ENCODE measurements at regions of chr4 and their contacts with region 1.

Region 1: DNA sequence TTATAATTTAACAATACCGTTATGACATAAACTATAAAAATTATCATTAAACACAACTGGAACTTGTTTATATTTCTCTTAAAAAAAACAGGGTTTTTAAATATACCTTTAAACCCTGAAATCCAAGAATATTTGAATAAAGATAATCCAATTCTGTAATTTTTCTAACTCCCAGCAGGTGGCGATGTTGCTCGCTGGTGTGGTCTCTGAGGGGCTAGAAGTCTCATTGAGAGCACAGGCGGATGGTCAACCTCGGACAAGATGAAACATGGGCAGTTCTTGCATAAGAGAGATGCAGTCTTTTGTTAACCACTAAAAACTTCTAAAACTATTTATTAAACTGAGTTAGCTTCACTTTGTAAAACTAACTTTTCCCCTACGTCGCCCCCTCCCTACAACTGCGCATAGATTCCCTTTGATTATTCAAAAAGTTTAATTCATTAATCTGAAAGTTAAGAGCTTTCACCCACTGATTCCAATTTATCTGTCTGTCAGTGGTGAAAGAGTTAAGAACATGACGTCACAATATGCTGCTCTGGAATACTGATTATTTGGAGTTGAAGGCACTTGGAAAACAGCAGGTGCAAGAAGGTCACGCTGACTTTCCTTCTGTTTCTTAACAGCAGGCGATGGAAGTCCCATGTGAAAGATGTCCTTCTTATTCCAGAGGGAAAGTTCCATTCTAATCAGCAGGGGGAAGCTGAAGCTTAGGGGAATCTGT is 29.5 kb downstream of the DMP1 start:
- DNase-seq: no peak
- ATAC-seq: no peak
- H3K4me3 Mint-ChIP-seq: no peak overlapping the region
- H3K27ac Mint-ChIP-seq: no peak overlapping the region
- H3K4me1 Mint-ChIP-seq: no peaks in the 10 kb centered on the region
- H3K27me3 Mint-ChIP-seq: peaks cover 7% of the 10 kb centered on the region

Region 2: DNA sequence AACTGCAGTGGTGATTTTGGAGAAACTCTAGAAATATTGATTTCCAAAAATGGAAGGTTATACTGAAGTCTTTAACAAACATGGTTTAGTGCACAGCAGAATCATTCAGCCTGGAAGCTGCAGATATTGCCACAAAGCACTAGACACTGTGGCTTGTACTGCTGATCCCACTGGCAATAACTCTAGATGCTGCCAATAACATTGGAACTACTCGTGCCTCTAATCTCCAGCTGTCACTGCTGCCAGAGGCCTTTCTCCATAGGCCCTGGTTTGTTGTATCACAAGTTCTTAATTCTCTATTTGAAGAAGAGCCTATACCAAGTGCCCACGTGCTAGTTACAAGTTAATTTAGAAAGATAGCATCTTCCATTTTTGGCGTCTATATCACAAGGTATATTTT is 10.2 kb before region 1 on chr4:
- CTCF ChIA-PET with region 1: no interaction called
- DNase-seq: no peak
- ATAC-seq: no peak
- H3K4me3 Mint-ChIP-seq: no peak overlapping the region
- H3K27ac Mint-ChIP-seq: no peak overlapping the region
- H3K4me1 Mint-ChIP-seq: no peaks in the 10 kb centered on the region
- H3K27me3 Mint-ChIP-seq: peaks cover 23% of the 10 kb centered on the region

Region 3: GRCh38 chr4:87848622-87849351 is 169.2 kb after region 1 on chr4:
- CTCF ChIA-PET with region 1: interaction called, 13 read pairs
- DNase-seq: peak; percentile 54
- ATAC-seq: peak; percentile 94
- H3K4me3 Mint-ChIP-seq: peak overlapping the region; percentile 21
- H3K27ac Mint-ChIP-seq: no peak overlapping the region
- H3K4me1 Mint-ChIP-seq: peaks cover 13% of the 10 kb centered on the region
- H3K27me3 Mint-ChIP-seq: peaks cover 40% of the 10 kb centered on the region